ENCODE measurements at regions of chr2 and their contacts with region 1.

Region 1: GRCh38 chr2:121071034-121071504 is 213.9 kb downstream of the TFCP2L1 start:
- DNase-seq: no peak
- ATAC-seq: peak; percentile 69
- H3K4me3 ChIP-seq: no peak overlapping the region
- H3K27ac ChIP-seq: no peak overlapping the region
- H3K4me1 ChIP-seq: peaks cover 13% of the 10 kb centered on the region
- H3K27me3 ChIP-seq: no peaks in the 10 kb centered on the region
- CTCF ChIP-seq: peak; percentile 99

Region 2: GRCh38 chr2:120958623-120959366 is 112.3 kb before region 1 on chr2:
- CTCF ChIA-PET with region 1: interaction called, 5 read pairs
- POLR2A ChIA-PET with region 1: interaction called, 11 read pairs
- in situ Hi-C with region 1: no loop called
- intact Hi-C with region 1: no loop called
- DNase-seq: no peak
- ATAC-seq: no peak
- H3K4me3 ChIP-seq: no peak overlapping the region
- H3K27ac ChIP-seq: no peak overlapping the region
- H3K4me1 ChIP-seq: no peaks in the 10 kb centered on the region
- H3K27me3 ChIP-seq: no peaks in the 10 kb centered on the region
- CTCF ChIP-seq: no peak; the same call in 1 of the 2 replicates

Region 3: DNA sequence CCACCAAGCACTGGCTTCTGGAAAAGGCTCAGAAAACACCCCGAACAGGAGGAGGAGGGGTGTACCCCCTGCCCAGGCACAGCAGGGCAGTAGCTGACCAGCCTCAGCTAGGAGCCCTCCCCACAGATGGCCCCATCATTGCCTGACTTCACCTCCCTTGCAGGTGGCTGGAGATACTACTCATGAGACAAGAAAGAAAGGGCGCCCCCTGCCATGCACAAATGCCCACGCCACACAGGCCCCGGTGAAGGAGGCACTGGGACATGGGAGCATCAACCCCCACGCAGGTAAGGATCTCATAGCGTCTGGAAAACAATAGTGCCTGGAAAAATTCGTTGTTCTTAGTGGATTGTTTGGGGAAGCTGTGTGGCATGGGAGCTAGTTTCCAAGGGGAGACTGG is 26.7 kb before region 1 on chr2:
- CTCF ChIA-PET with region 1: no interaction called
- POLR2A ChIA-PET with region 1: no interaction called
- in situ Hi-C with region 1: no loop called
- intact Hi-C with region 1: no loop called
- DNase-seq: no peak
- ATAC-seq: no peak
- H3K4me3 ChIP-seq: no peak overlapping the region
- H3K27ac ChIP-seq: no peak overlapping the region
- H3K4me1 ChIP-seq: no peaks in the 10 kb centered on the region
- H3K27me3 ChIP-seq: no peaks in the 10 kb centered on the region; the same call in 1 of the 2 replicates
- CTCF ChIP-seq: no peak; the same call in 1 of the 2 replicates

Region 4: DNA sequence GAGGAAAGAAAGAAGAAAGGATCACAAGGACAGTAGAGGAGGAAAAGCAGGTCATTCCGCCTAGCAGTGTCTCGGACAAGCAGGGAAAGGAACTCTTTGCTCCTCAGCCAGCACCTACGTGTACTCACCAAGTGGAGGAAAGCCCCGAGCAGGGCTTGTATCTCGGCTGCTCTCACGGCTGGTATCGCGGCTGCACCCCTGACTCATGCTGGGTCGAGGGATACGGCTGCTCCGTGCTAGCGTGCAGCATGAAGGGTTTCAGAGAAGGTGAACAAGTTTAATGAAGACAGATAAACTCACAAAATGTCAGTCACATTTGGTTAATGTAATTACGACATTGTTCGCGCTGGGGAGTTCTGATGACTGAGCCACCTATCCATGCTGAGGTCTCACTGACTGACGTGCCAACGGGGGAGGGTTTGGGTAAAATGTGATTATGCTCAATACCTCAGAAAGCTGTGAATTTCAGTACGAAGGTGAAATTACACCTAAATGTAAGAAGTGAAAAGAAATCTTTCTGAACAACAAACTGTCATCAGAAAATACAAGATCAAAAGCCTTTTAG is 347.5 kb after region 1 on chr2:
- CTCF ChIA-PET with region 1: no interaction called
- POLR2A ChIA-PET with region 1: no interaction called
- in situ Hi-C with region 1: no loop called
- intact Hi-C with region 1: no loop called
- DNase-seq: no peak
- ATAC-seq: no peak
- H3K4me3 ChIP-seq: no peak overlapping the region
- H3K27ac ChIP-seq: no peak overlapping the region
- H3K4me1 ChIP-seq: no peaks in the 10 kb centered on the region
- H3K27me3 ChIP-seq: no peaks in the 10 kb centered on the region
- CTCF ChIP-seq: no peak